ENCODE measurements at regions of chr9 and their contacts with region 1.

Region 1: GRCh38 chr9:70413798-70414775 is at the start of gene KLF9:
- DNase-seq: peak; percentile 89
- ATAC-seq: peak; percentile 68
- H3K4me3 ChIP-seq: peak within 1 kb of the TSS; percentile 74 to 88 (median 84)
- H3K27ac ChIP-seq: peak within 1 kb of the TSS; percentile 95
- H3K4me1 ChIP-seq: peaks cover 53% of the 10 kb centered on the region
- H3K27me3 ChIP-seq: peaks cover 0 to 9% of the 10 kb centered on the region in 2 experiments; a peak in 2 of 5 replicates
- CTCF ChIP-seq: 0 out of 2 replicates have a peak, but pooled peaks have one; percentile 18
- EP300 ChIP-seq: 0 out of 4 replicates have a peak, but pooled peaks of 1 of the 2 experiments have one; percentile 25
- POLR2A ChIP-seq: peak in 1 of 2 experiments; percentile 88; a peak in 2 of 4 replicates
- RAD21 ChIP-seq: no peak
- total RNA-seq, gene KLF9: 5.7 and 7.2 TPM in 2 replicates

Region 2: DNA sequence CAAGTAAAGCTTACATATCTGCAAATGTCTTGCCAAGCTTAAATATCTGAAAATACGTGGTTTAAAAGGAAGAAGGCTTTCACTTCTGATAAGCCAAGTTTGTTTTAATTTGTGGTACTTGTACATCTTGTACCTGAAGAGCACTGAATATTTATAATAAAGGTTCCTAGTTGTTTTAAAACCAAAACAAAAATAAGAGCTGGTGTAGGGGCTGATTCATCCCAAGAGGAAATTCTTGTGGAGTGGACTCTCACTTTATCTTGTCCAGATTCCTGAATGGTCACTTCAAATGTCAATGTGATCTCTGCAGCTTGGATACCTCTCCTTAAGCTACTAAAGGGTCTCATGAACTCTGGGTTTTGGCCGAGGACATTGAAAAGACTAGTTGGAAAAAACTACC is 340.9 kb before region 1 on chr9:
- CTCF ChIA-PET with region 1: no interaction called
- POLR2A ChIA-PET with region 1: no interaction called
- in situ Hi-C with region 1: no loop called
- intact Hi-C with region 1: no loop called
- DNase-seq: no peak
- ATAC-seq: no peak
- H3K4me3 ChIP-seq: no peak overlapping the region
- H3K27ac ChIP-seq: no peak overlapping the region
- H3K4me1 ChIP-seq: no peaks in the 10 kb centered on the region
- H3K27me3 ChIP-seq: peaks cover 0 to 12% of the 10 kb centered on the region in 2 experiments; a peak in 1 of 5 replicates
- CTCF ChIP-seq: no peak
- EP300 ChIP-seq: no peak
- POLR2A ChIP-seq: no peak
- RAD21 ChIP-seq: no peak

Region 3: GRCh38 chr9:70258692-70259511 is 155.2 kb before region 1 on chr9 and contains the start of gene SMC5:
- CTCF ChIA-PET with region 1: no interaction called
- POLR2A ChIA-PET with region 1: interaction called, 5 read pairs
- in situ Hi-C with region 1: loop called (anchors 10 kb)
- intact Hi-C with region 1: loop called (anchors 5 kb)
- DNase-seq: peak; percentile 80
- ATAC-seq: peak; percentile 91
- H3K4me3 ChIP-seq: peak within 1 kb of the TSS; percentile 84 to 99 (median 95)
- H3K27ac ChIP-seq: peak within 1 kb of the TSS; percentile 96
- H3K4me1 ChIP-seq: peaks cover 63% of the 10 kb centered on the region
- H3K27me3 ChIP-seq: no peaks in the 10 kb centered on the region; a peak in 2 of 5 replicates
- CTCF ChIP-seq: no peak
- EP300 ChIP-seq: 0 out of 4 replicates have a peak, but pooled peaks of 1 of the 2 experiments have one; percentile 10
- POLR2A ChIP-seq: peak; percentile 93 to 94
- RAD21 ChIP-seq: peak; percentile 60
- total RNA-seq, gene SMC5: 26.7 and 29.4 TPM in 2 replicates

Region 4: DNA sequence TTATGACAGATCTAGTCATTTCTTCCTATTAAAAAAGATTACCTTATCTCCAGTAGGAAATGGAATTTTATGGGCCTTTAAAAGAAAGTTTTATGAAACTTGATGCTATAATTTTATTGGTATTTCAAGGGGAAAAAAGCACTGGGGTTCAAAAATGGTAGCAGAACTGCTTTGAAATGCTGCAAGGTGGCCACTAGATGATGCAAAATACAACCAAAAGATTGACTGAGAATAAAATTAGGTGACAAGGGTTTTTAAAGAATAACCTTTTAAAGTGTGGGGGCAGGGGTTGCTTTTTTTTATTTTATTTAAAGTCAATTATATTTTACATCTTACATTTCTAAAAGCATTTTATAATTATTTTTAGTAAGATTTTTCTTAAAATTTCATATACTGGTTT is 61.3 kb before region 1 on chr9:
- CTCF ChIA-PET with region 1: no interaction called
- POLR2A ChIA-PET with region 1: no interaction called
- in situ Hi-C with region 1: no loop called
- intact Hi-C with region 1: loop called (anchors 5 kb)
- DNase-seq: no peak
- ATAC-seq: no peak
- H3K4me3 ChIP-seq: no peak overlapping the region
- H3K27ac ChIP-seq: no peak overlapping the region
- H3K4me1 ChIP-seq: no peaks in the 10 kb centered on the region
- H3K27me3 ChIP-seq: no peaks in the 10 kb centered on the region
- CTCF ChIP-seq: 0 out of 2 replicates have a peak, but pooled peaks have one; percentile 27
- EP300 ChIP-seq: no peak
- POLR2A ChIP-seq: no peak
- RAD21 ChIP-seq: no peak

Region 5: GRCh38 chr9:70427161-70427945 is 13.3 kb after region 1 on chr9:
- CTCF ChIA-PET with region 1: no interaction called
- POLR2A ChIA-PET with region 1: interaction called, 49 read pairs
- in situ Hi-C with region 1: no loop called
- intact Hi-C with region 1: no loop called
- DNase-seq: no peak
- ATAC-seq: no peak
- H3K4me3 ChIP-seq: no peak overlapping the region
- H3K27ac ChIP-seq: no peak overlapping the region
- H3K4me1 ChIP-seq: 0 out of 2 replicates have a peak, but pooled peaks cover 1% of the 10 kb centered on the region
- H3K27me3 ChIP-seq: peaks cover 0 to 8% of the 10 kb centered on the region in 2 experiments; a peak in 1 of 5 replicates
- CTCF ChIP-seq: no peak
- EP300 ChIP-seq: no peak
- POLR2A ChIP-seq: no peak
- RAD21 ChIP-seq: no peak

Region 6: DNA sequence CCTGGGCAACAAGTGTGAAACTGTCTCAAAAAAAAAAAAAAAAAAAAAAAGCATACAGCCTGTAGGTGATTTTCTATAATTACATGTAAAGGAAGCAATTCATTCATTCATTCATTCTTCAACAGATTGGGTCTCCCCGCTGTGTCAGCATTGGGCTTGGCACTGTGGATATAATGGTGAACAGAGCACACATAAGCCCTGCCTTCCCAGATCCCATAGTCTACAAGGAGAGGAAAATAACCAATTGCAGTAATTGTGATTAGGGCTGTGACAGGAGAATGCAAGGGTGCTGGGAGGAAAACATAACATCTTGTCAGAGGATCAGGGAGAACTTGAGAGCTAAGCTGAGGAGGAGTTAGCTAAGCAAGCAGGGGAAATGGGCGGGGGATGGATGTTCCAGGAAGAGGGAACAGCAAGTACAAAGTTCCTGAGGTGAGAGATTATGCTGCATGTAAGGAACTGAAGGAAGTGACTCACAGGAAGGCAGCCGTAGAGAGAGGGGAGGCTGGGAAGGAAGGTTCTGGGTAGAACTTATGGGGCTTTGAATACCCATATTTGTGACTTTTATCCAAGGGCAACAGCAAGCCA is 24.3 kb after region 1 on chr9:
- CTCF ChIA-PET with region 1: no interaction called
- POLR2A ChIA-PET with region 1: interaction called, 79 read pairs
- in situ Hi-C with region 1: no loop called
- intact Hi-C with region 1: no loop called
- DNase-seq: peak; percentile 24
- ATAC-seq: no peak; the same call in 2 of the 3 replicates
- H3K4me3 ChIP-seq: no peak overlapping the region
- H3K27ac ChIP-seq: no peak overlapping the region
- H3K4me1 ChIP-seq: peaks cover 48% of the 10 kb centered on the region
- H3K27me3 ChIP-seq: no peaks in the 10 kb centered on the region; a peak in 1 of 5 replicates
- CTCF ChIP-seq: no peak
- EP300 ChIP-seq: no peak
- POLR2A ChIP-seq: no peak
- RAD21 ChIP-seq: no peak

Region 7: DNA sequence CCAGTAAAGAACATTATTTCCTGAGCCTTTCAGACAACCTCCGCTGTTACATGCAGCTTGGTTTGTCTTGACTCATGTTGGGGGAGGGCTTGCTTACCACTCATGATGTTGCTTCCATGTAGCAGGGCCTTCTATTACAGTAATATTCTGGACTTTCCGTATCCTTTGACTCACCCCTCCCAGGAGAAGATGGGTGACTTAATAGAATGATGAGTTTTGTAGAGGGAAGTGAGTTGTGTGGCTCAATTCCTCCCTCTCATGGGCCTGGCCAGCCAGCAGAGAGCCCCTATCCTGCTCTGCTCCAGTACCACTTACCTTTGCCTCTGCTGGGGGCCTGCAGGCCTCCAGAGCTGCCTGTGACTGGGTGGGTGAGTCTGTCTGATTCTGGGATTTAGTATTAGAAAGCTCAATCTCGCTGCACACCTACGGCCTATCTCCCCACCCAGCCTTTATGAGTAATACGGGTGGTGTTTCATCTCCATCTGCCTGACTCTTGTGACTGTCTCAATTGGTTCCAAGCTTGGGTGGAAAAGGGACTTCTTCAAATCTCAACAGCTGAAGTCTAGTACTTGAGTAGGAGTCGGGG is 53.0 kb after region 1 on chr9:
- CTCF ChIA-PET with region 1: no interaction called
- POLR2A ChIA-PET with region 1: interaction called, 81 read pairs
- in situ Hi-C with region 1: no loop called
- intact Hi-C with region 1: no loop called
- DNase-seq: no peak
- ATAC-seq: no peak
- H3K4me3 ChIP-seq: no peak overlapping the region
- H3K27ac ChIP-seq: no peak overlapping the region
- H3K4me1 ChIP-seq: peaks cover 33% of the 10 kb centered on the region
- H3K27me3 ChIP-seq: 0 out of 5 replicates have a peak, but pooled peaks cover 0 to 3% of the 10 kb centered on the region in 2 experiments
- CTCF ChIP-seq: no peak
- EP300 ChIP-seq: no peak
- POLR2A ChIP-seq: no peak
- RAD21 ChIP-seq: no peak

Region 8: DNA sequence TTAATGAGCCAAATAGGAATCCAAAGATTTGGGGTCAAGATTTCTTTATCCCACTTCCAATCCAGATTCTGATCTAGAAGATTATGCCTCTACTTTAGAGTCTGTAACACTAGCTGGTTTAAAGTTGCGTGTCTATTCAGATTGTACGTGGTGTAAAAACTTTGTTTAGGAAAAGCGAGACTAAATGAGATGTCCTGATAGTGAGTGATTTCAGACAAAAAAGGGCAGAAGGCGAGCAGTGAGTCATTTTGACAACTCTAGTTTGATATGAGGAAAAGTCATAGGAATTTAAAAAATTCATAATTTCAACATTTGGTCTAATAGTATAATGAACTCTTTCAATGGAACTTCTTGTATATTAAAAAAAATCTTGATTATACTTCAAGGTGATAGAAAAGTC is 120.0 kb after region 1 on chr9:
- CTCF ChIA-PET with region 1: no interaction called
- POLR2A ChIA-PET with region 1: no interaction called
- in situ Hi-C with region 1: no loop called
- intact Hi-C with region 1: no loop called
- DNase-seq: no peak
- ATAC-seq: no peak
- H3K4me3 ChIP-seq: no peak overlapping the region
- H3K27ac ChIP-seq: no peak overlapping the region
- H3K4me1 ChIP-seq: no peaks in the 10 kb centered on the region
- H3K27me3 ChIP-seq: no peaks in the 10 kb centered on the region
- CTCF ChIP-seq: no peak
- EP300 ChIP-seq: no peak
- POLR2A ChIP-seq: no peak
- RAD21 ChIP-seq: no peak